GM12878 (cell line): ENCODE measurements at regions of chr17 and their contacts with region 1.

Region 1: GRCh38 chr17:41322094-41322902 is 6.8 kb upstream of the KRTAP17-1 start:
- DNase-seq: no peak
- ATAC-seq: peak; percentile 76
- H3K4me3 ChIP-seq: no peak overlapping the region
- H3K27ac ChIP-seq: no peak overlapping the region
- H3K4me1 ChIP-seq: no peaks in the 10 kb centered on the region
- H3K27me3 ChIP-seq: no peaks in the 10 kb centered on the region
- CTCF ChIP-seq: peak; percentile 64 to 80 (median 74)
- EP300 ChIP-seq: no peak
- POLR2A ChIP-seq: no peak
- RAD21 ChIP-seq: peak; percentile 70

Region 2: DNA sequence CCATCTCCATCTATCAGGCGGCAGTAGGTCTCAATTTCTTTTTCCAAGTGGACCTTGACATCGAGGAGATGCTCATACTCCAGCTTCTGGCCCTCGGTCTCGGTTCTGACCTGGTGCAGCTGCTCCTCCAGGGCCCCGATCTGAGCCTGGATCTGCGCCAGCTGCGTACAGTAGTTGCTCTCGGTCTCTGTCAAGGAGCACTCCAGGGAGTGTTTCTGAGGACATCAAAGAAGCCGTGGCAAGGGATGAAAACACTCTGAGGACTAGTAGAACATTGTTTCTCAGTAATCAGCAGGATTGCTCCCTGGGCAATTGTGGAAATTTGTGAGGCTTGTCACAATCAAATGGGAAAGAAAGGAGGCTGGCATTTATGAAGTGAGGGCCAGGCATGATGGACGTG is 528.5 kb before region 1 on chr17:
- CTCF ChIA-PET with region 1: no interaction called
- POLR2A ChIA-PET with region 1: no interaction called
- RAD21 ChIA-PET with region 1: no interaction called
- SMC1A ChIA-PET with region 1: no interaction called
- in situ Hi-C with region 1: no loop called
- intact Hi-C with region 1: no loop called
- DNase-seq: no peak
- ATAC-seq: no peak
- H3K4me3 ChIP-seq: no peak overlapping the region
- H3K27ac ChIP-seq: no peak overlapping the region
- H3K4me1 ChIP-seq: no peaks in the 10 kb centered on the region
- H3K27me3 ChIP-seq: peaks cover 2 to 9% of the 10 kb centered on the region in 2 experiments; a peak in 1 of 4 replicates
- CTCF ChIP-seq: no peak
- EP300 ChIP-seq: no peak
- POLR2A ChIP-seq: no peak
- RAD21 ChIP-seq: no peak

Region 3: GRCh38 chr17:40909351-40909750 is 412.9 kb before region 1 on chr17:
- CTCF ChIA-PET with region 1: interaction called, 9 read pairs
- POLR2A ChIA-PET with region 1: no interaction called
- RAD21 ChIA-PET with region 1: interaction called, 4 read pairs
- SMC1A ChIA-PET with region 1: no interaction called
- in situ Hi-C with region 1: loop called (anchors 5 kb)
- intact Hi-C with region 1: loop called (anchors 1 kb)
- DNase-seq: no peak
- ATAC-seq: peak; percentile 84
- H3K4me3 ChIP-seq: no peak overlapping the region
- H3K27ac ChIP-seq: no peak overlapping the region
- H3K4me1 ChIP-seq: 0 out of 2 replicates have a peak, but pooled peaks cover 2% of the 10 kb centered on the region
- H3K27me3 ChIP-seq: peaks cover 0 to 4% of the 10 kb centered on the region in 2 experiments; a peak in 1 of 4 replicates
- CTCF ChIP-seq: peak; percentile 56 to 72 (median 68)
- EP300 ChIP-seq: no peak
- POLR2A ChIP-seq: no peak
- RAD21 ChIP-seq: peak; percentile 79

Region 4: GRCh38 chr17:41294016-41294415 is 28.3 kb before region 1 on chr17:
- CTCF ChIA-PET with region 1: no interaction called
- POLR2A ChIA-PET with region 1: no interaction called
- RAD21 ChIA-PET with region 1: no interaction called
- SMC1A ChIA-PET with region 1: no interaction called
- in situ Hi-C with region 1: no loop called
- intact Hi-C with region 1: no loop called
- DNase-seq: no peak
- ATAC-seq: no peak
- H3K4me3 ChIP-seq: no peak overlapping the region
- H3K27ac ChIP-seq: no peak overlapping the region
- H3K4me1 ChIP-seq: no peaks in the 10 kb centered on the region
- H3K27me3 ChIP-seq: no peaks in the 10 kb centered on the region; a peak in 1 of 4 replicates
- CTCF ChIP-seq: no peak
- EP300 ChIP-seq: no peak
- POLR2A ChIP-seq: no peak
- RAD21 ChIP-seq: no peak

Region 5: GRCh38 chr17:41334425-41334824 is 12.1 kb after region 1 on chr17:
- CTCF ChIA-PET with region 1: interaction called, 14 read pairs
- POLR2A ChIA-PET with region 1: no interaction called
- RAD21 ChIA-PET with region 1: interaction called, 8 read pairs
- SMC1A ChIA-PET with region 1: interaction called, 5 read pairs
- in situ Hi-C with region 1: no loop called
- intact Hi-C with region 1: no loop called
- DNase-seq: peak; percentile 7
- ATAC-seq: no peak
- H3K4me3 ChIP-seq: no peak overlapping the region
- H3K27ac ChIP-seq: no peak overlapping the region
- H3K4me1 ChIP-seq: peaks cover 5% of the 10 kb centered on the region
- H3K27me3 ChIP-seq: no peaks in the 10 kb centered on the region; a peak in 1 of 4 replicates
- CTCF ChIP-seq: no peak
- EP300 ChIP-seq: no peak
- POLR2A ChIP-seq: no peak
- RAD21 ChIP-seq: no peak